H1 (cell line): ENCODE measurements at regions of chr22 and their contacts with region 1.

Region 1: GRCh38 chr22:30356449-30357235 is at the starts of genes CCDC157 and SF3A1:
- DNase-seq: peak; percentile 72 to 91
- H3K4me3 ChIP-seq: peak within 1 kb of the TSS; percentile 78 to 93 (median 91)
- H3K27ac ChIP-seq: peak within 1 kb of the TSS; percentile 93
- H3K4me1 ChIP-seq: peaks cover 2 to 11% (median 4%) of the 10 kb centered on the region in 4 experiments; a peak in 6 of 7 replicates
- H3K27me3 ChIP-seq: no peaks in the 10 kb centered on the region
- CTCF ChIP-seq: no peak
- EP300 ChIP-seq: peak in 1 of 2 experiments; percentile 5; a peak in 1 of 3 replicates
- POLR2A ChIP-seq: peak; percentile 87 to 98
- RAD21 ChIP-seq: no peak
- total RNA-seq, gene CCDC157: 4.1 and 4.8 TPM in 2 replicates
- total RNA-seq, gene SF3A1: 275 and 285 TPM in 2 replicates

Region 2: GRCh38 chr22:30235687-30236170 is 120.9 kb before region 1 on chr22:
- CTCF ChIA-PET with region 1: no interaction called
- POLR2A ChIA-PET with region 1: no interaction called
- DNase-seq: no peak
- H3K4me3 ChIP-seq: no peak overlapping the region
- H3K27ac ChIP-seq: no peak overlapping the region
- H3K4me1 ChIP-seq: peaks cover 8 to 29% (median 18%) of the 10 kb centered on the region in 4 experiments
- H3K27me3 ChIP-seq: no peaks in the 10 kb centered on the region
- CTCF ChIP-seq: no peak
- EP300 ChIP-seq: no peak
- POLR2A ChIP-seq: no peak
- RAD21 ChIP-seq: no peak

Region 3: DNA sequence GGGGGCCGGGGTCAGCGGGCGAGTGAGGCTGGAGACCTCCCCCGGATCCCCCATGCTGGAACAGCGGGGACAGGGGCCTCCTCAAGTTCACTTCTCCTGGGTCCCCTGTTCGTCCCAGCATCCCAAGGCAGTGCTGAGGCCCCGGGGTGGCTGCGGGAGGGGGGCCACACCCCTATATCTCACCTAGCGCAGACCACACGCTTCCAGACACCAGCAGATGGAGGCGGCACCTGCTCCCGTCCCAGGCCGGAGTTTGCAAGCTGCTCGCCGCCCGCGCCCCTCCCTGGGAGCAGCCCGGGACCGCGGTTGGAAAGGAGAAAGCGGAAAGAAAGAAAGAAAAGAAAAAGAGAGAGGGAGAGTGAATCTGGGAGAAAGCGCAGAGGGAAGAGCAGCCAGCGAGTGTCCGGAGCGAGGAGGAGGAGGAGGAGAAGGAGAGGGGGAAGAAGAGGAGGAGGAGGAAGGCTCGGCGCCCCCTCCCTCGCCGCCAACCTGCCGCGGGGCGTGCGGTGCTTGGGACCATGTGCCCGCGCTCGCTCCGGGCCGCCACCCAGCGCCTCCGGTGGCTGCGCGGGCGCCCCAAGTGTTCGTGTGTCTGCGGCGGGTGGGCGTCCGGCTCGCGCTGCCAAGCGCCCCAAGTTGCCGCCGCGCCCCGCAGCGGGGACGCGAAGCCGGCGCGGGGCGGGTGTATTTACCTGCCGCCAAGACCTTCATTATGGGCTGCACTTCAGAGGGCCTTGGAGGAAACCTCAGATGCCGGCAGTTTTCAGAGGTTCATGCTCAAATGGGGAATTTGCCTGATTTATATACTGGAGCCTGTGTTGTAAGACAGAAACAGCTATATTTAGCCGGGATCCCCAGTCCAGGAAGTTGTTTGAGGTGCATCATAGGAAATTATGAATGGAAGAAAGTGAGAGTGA is 110.4 kb before region 1 on chr22 and contains the start of gene LIF:
- CTCF ChIA-PET with region 1: no interaction called
- POLR2A ChIA-PET with region 1: no interaction called
- DNase-seq: peak in 1 of 2 experiments; percentile 75
- H3K4me3 ChIP-seq: peak within 1 kb of the TSS; percentile 49 to 72 (median 65)
- H3K27ac ChIP-seq: no peak within 1 kb of the TSS
- H3K4me1 ChIP-seq: peaks cover 0 to 20% (median 11%) of the 10 kb centered on the region in 4 experiments; a peak in 6 of 7 replicates
- H3K27me3 ChIP-seq: no peaks in the 10 kb centered on the region; a peak in 2 of 7 replicates
- CTCF ChIP-seq: no peak
- EP300 ChIP-seq: no peak
- POLR2A ChIP-seq: no peak
- RAD21 ChIP-seq: peak in 1 of 2 experiments; percentile 6; a peak in 1 of 4 replicates
- total RNA-seq, gene LIF: 3.3 and 3.5 TPM in 2 replicates

Region 4: DNA sequence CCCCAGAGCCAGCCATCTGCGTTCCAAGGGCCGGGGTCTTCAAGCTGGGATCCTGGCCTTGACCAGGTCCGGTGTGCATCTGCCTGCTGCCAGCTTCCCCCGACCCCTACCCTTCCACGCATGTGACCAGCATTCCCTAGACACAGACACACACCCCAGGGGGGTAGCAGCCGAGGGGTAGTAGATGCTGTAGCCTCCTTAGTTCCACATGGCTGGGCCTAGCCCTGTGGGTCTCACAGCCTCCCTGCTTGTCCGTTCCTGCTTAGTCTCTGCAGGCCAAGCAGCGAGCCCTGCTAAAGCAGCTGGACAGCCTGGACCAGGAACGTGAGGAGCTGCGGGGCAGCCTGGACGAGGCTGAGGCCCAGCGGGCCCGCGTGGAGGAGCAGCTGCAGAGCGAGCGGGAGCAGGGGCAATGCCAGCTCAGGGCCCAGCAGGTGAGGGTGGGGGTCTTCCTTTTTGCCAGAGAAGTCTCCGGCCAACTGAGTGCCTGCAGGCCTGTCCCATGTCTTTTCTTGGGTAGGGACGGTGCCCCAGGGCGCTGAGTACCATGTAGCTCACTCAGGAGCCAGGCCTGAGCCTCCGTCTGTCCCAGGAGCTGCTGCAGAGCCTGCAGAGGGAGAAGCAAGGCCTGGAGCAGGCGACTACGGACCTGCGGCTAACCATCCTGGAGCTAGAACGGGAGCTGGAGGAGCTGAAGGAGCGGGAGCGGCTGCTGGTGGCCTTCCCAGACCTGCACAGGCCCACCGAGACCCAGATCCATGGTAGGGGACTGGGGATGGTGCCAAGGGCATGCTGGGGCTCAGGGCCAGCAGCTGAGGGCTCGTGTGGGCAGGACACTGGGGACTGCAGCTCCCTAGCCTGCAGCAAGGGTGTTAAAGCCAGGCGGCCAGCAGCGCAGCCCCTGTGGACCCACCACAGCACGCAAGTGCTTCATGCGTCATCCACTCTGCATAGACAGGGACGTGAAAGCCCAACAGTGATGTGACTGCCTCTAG is 17.0 kb after region 1 on chr22:
- CTCF ChIA-PET with region 1: interaction called, 4 read pairs
- POLR2A ChIA-PET with region 1: interaction called, 129 read pairs
- DNase-seq: no peak
- H3K4me3 ChIP-seq: no peak overlapping the region
- H3K27ac ChIP-seq: peak overlapping the region; percentile 61; the same call in 1 of the 2 replicates
- H3K4me1 ChIP-seq: peaks cover 0 to 2% (median 0%) of the 10 kb centered on the region in 4 experiments; a peak in 1 of 7 replicates
- H3K27me3 ChIP-seq: no peaks in the 10 kb centered on the region; a peak in 1 of 7 replicates
- CTCF ChIP-seq: no peak
- EP300 ChIP-seq: no peak
- POLR2A ChIP-seq: no peak
- RAD21 ChIP-seq: no peak